ENCODE measurements at regions of chr7 and their contacts with region 1.

Region 1: DNA sequence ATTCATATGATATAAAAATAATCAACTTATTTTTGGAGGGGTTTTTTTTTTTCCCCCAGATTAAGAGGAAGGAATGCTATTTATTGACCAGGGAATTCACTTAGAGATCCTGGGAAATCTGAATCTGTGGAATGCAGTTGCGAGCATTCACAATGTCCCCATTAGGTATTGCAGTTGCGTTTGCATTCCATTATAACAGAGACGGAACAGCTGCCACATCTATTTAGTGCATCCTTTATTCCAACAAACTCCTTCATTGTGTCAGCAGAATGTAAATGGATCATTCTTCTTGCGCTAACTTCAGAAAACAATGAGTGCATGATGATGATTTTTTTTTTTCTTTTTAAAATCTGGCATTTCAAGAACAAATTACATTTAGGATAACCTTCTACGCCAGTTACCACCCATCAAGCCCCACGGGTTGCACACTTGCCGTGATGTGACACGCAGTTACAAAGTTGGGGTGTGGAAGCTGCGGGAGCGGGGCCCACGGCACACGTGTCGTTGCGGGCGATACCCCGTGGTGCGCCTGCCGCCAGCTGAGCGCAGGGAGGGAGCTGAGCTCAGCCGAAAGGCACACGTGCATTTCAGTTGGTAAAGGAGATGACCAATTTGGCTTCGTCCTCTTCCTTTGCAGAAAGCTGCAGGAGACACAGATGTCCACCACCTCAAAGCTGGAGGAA is 175.5 kb upstream of the SH2B2 start:
- DNase-seq: peak in 40 of 42 donors; percentile 25 to 75 (median 56)

Region 2: DNA sequence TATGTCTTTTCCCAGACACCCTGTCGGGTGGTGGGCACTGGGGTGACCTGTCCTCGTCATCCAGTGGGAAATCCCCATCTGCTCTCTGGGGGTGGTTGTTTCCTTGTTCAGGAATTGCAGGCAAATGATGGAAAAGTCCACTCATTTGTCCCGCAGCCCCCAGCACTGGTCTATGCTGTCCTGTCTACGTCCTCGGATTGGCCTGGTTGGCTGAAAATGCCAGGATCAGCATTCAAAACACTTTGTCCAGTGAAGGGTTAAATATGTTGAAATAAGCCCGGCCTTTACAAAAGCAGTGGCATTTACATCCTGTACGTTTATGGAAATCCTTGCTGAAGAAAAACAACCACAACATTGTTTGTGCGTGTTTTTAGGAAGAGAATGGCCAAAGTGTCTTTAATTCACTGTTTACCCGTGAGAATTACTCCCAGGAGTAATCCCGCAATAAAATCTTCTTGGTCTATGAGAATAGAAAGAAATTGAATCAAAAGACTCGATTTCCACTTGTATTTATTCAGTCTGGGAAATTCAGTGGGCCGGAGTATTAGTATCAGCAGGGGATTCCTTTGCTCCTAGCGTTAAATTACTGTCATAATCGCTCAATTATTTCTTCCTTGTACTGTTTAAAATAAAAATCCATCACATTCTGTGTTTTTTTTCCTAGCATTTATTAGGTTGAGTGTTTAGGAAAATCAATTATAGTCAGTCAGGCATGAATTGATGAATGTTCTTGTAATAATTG is 58.6 kb after region 1 on chr7:
- intact Hi-C with region 1: loop called (anchors 10 kb)
- DNase-seq: no peak

Measured in head of caudate nucleus (tissue), 42 donors.